Activated CD8-positive, alpha-beta T cell treated with anti-CD3 and anti-CD28 coated beads, Interleukin-2, amount 10 ng/mL, durations not matched to agents 7 days and 5 days (primary cell): ENCODE measurements at regions of chr18 and their contacts with region 1.

Region 1: GRCh38 chr18:47772374-47773248 is 157.8 kb downstream of the SMAD2 start:
- DNase-seq: peak; percentile 67
- ATAC-seq: peak; percentile 64
- H3K4me3 Mint-ChIP-seq: no peak overlapping the region
- H3K27ac Mint-ChIP-seq: no peak overlapping the region
- H3K4me1 Mint-ChIP-seq: peaks cover 2% of the 10 kb centered on the region
- H3K27me3 Mint-ChIP-seq: peaks cover 16% of the 10 kb centered on the region

Region 2: GRCh38 chr18:48024851-48025660 is 252.4 kb after region 1 on chr18:
- CTCF ChIA-PET with region 1: interaction called, 10 read pairs
- POLR2A ChIA-PET with region 1: no interaction called
- DNase-seq: no peak
- ATAC-seq: no peak
- H3K4me3 Mint-ChIP-seq: no peak overlapping the region
- H3K27ac Mint-ChIP-seq: no peak overlapping the region
- H3K4me1 Mint-ChIP-seq: peaks cover 3% of the 10 kb centered on the region
- H3K27me3 Mint-ChIP-seq: peaks cover 6% of the 10 kb centered on the region